Uterus (tissue), 4 donors: ENCODE measurements at regions of chr17 and their contacts with region 1.

Region 1: GRCh38 chr17:46082257-46082656 is 83.2 kb downstream of the STH start:
- DNase-seq: no peak
- H3K4me3 ChIP-seq: no peak overlapping the region
- H3K27ac ChIP-seq: no peak overlapping the region
- H3K4me1 ChIP-seq: peaks cover 5% of the 10 kb centered on the region in 2 donors
- H3K27me3 ChIP-seq: no peaks in the 10 kb centered on the region
- CTCF ChIP-seq: no peak
- POLR2A ChIP-seq: no peak

Region 2: GRCh38 chr17:46020023-46020761 is 62.1 kb before region 1 on chr17:
- intact Hi-C with region 1: no loop called
- DNase-seq: no peak
- H3K4me3 ChIP-seq: no peak overlapping the region
- H3K27ac ChIP-seq: no peak overlapping the region
- H3K4me1 ChIP-seq: no peaks in the 10 kb centered on the region
- H3K27me3 ChIP-seq: no peaks in the 10 kb centered on the region
- CTCF ChIP-seq: no peak
- POLR2A ChIP-seq: no peak

Region 3: GRCh38 chr17:46154151-46154816 is 72.0 kb after region 1 on chr17:
- intact Hi-C with region 1: loop called (anchors 10 kb)
- DNase-seq: no peak
- H3K4me3 ChIP-seq: no peak overlapping the region
- H3K27ac ChIP-seq: peak overlapping the region; percentile 1 to 20
- H3K4me1 ChIP-seq: peaks cover 7 to 23% of the 10 kb centered on the region in 2 donors
- H3K27me3 ChIP-seq: no peaks in the 10 kb centered on the region
- CTCF ChIP-seq: no peak
- POLR2A ChIP-seq: no peak